ENCODE measurements at regions of chr6 and their contacts with region 1.

Region 1: GRCh38 chr6:10722820-10723566 is at the start of gene TMEM14C:
- DNase-seq: peak; percentile 94
- H3K4me3 Mint-ChIP-seq: peak within 1 kb of the TSS; percentile 89
- H3K27ac Mint-ChIP-seq: peak within 1 kb of the TSS; percentile 91
- H3K4me1 Mint-ChIP-seq: peaks cover 44% of the 10 kb centered on the region
- H3K27me3 Mint-ChIP-seq: no peaks in the 10 kb centered on the region
- total RNA-seq, gene TMEM14C: 77.0 to 81.1 TPM

Region 2: DNA sequence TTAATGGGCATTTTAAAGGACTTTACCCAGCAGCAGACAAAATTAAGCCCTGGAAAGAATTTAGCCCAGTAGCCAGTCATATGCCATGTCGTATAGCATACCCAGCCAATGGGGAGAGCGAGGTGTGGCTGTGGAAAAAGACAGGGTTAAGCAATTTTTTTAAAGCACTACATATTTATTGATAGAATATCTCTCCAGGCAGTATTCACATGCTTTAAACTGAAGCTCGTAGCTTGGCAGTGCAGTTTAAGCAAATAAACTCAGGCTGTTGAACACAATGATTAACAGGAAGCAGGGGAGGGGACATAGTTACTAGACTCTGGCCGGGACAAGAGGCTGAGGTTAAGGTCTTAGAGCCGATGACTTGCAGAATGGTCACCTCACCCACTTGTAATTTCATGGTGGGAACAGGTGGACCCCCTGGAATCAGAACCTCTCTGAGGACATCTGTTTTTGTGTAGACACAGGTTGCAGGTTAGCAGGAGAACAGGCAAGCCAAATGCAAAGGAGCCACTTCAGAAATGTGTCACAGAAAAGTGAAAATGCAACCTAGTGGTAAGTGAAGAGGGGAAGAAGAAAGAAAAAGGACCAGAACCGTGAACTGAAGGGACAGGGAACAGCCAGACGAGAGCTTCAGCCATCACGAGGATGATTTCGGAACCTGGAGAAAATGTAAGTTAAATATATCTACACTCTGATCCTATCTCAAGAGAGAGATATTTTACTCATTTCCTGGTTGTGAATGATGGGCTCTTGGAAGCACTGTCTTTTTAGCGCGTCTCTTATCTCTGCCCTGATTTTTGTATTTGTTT is 194.6 kb before region 1 on chr6:
- CTCF ChIA-PET with region 1: no interaction called
- intact Hi-C with region 1: loop called (anchors 1 kb)
- DNase-seq: peak; percentile 38
- H3K4me3 Mint-ChIP-seq: peak overlapping the region; percentile 80
- H3K27ac Mint-ChIP-seq: peak overlapping the region; percentile 71
- H3K4me1 Mint-ChIP-seq: peaks cover 48% of the 10 kb centered on the region
- H3K27me3 Mint-ChIP-seq: no peaks in the 10 kb centered on the region

Region 3: DNA sequence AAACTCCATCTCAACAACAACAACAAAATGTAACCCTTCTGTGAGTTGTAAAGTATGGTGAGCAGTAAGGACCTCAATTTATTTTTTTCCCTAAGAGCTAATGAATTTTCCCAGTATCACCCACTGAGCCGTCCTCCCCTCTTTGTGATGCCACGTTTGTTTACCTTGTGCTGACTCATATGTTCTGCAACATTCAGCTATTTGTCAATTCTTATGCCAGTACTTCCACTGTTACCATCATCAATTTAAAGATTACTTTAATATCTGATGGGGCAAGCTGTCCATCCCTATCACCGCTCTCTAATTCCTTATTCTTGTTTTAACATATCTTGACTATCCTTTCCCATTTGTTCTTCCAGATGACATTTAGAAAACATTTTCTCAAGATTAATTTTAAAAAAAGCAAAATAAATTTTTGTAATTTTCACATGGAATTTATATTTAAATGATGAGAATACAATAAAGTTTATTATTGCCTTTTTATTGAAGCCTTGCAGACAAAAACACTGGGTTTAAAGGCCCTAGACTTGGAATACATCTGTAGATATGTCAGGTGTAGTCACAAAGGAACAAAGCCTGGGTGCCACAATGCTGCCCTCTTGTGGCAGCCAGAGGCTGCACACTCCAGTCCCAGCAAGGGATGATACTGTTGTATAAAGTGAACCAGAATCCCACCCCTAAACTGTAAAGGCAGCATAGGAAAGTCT is 78.0 kb after region 1 on chr6:
- CTCF ChIA-PET with region 1: interaction called, 3 read pairs
- intact Hi-C with region 1: loop called (anchors 1 kb)
- DNase-seq: peak; percentile 75
- H3K4me3 Mint-ChIP-seq: no peak overlapping the region
- H3K27ac Mint-ChIP-seq: no peak overlapping the region
- H3K4me1 Mint-ChIP-seq: no peaks in the 10 kb centered on the region
- H3K27me3 Mint-ChIP-seq: no peaks in the 10 kb centered on the region